IMR-90 (cell line): ENCODE measurements at regions of chr4 and their contacts with region 1.

Region 1: GRCh38 chr4:54082168-54082567 is 17.8 kb upstream of the CHIC2 start:
- DNase-seq: peak; percentile 100
- ATAC-seq: peak; percentile 87
- H3K4me3 ChIP-seq: no peak overlapping the region
- H3K27ac ChIP-seq: peak overlapping the region; percentile 48; the same call in 1 of the 2 replicates
- H3K4me1 ChIP-seq: peaks cover 16% of the 10 kb centered on the region
- H3K27me3 ChIP-seq: no peaks in the 10 kb centered on the region
- CTCF ChIP-seq: no peak
- POLR2A ChIP-seq: no peak
- RAD21 ChIP-seq: no peak

Region 2: DNA sequence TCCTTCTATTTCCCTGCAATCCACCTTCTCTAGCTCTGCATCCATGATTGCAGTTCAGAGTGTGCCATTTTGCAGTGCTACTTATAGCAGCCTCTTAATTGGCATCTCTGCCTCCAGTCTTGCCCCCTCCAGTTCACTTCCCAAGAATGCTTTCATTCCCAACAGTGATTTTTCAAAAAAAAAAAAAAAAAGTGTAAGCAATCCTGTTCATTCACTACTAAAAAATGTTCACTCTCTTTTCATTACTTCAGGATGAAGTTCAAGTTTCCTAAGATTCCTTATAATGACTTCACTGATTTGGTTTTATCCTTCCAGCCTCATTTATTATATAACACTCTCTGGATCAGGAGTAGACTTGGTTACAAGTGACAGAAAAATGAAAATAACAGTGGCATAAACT is 366.2 kb before region 1 on chr4:
- CTCF ChIA-PET with region 1: no interaction called
- POLR2A ChIA-PET with region 1: interaction called, 10 read pairs
- dilution Hi-C with region 1: no loop called
- in situ Hi-C with region 1: no loop called
- intact Hi-C with region 1: no loop called
- DNase-seq: peak; percentile 52
- ATAC-seq: peak; percentile 30
- H3K4me3 ChIP-seq: no peak overlapping the region
- H3K27ac ChIP-seq: no peak overlapping the region
- H3K4me1 ChIP-seq: peaks cover 28% of the 10 kb centered on the region
- H3K27me3 ChIP-seq: no peaks in the 10 kb centered on the region
- CTCF ChIP-seq: no peak
- POLR2A ChIP-seq: no peak
- RAD21 ChIP-seq: no peak

Region 3: DNA sequence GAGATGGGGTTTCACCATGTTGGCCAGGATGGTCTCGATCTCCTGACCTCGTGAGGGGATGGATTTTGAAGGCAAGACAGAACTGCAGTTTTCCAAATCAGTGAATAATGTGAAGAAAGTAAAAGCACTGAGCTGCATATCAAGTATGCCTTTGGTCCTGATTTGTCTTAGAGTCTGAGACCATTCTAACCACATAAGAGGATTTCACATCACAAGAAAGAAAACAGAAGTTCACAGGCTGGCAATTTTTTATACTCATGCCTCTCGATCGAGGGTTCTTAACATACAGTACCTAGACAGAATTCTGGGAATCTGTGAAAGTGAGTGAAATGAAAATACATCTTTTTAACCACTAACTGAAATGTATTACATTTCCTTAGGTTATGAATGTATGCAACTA is 41.1 kb before region 1 on chr4:
- CTCF ChIA-PET with region 1: no interaction called
- POLR2A ChIA-PET with region 1: no interaction called
- dilution Hi-C with region 1: no loop called
- in situ Hi-C with region 1: no loop called
- intact Hi-C with region 1: no loop called
- DNase-seq: no peak
- ATAC-seq: no peak
- H3K4me3 ChIP-seq: no peak overlapping the region
- H3K27ac ChIP-seq: no peak overlapping the region
- H3K4me1 ChIP-seq: 0 out of 2 replicates have a peak, but pooled peaks cover 2% of the 10 kb centered on the region
- H3K27me3 ChIP-seq: no peaks in the 10 kb centered on the region
- CTCF ChIP-seq: no peak
- POLR2A ChIP-seq: no peak
- RAD21 ChIP-seq: no peak

Region 4: GRCh38 chr4:54152846-54153600 is 70.9 kb after region 1 on chr4:
- CTCF ChIA-PET with region 1: no interaction called
- POLR2A ChIA-PET with region 1: no interaction called
- dilution Hi-C with region 1: no loop called
- in situ Hi-C with region 1: no loop called
- intact Hi-C with region 1: loop called (anchors 5 kb)
- DNase-seq: peak; percentile 63
- ATAC-seq: peak; percentile 90
- H3K4me3 ChIP-seq: no peak overlapping the region
- H3K27ac ChIP-seq: no peak overlapping the region
- H3K4me1 ChIP-seq: peaks cover 8% of the 10 kb centered on the region; the same call in 1 of the 2 replicates
- H3K27me3 ChIP-seq: no peaks in the 10 kb centered on the region
- CTCF ChIP-seq: no peak
- POLR2A ChIP-seq: no peak
- RAD21 ChIP-seq: no peak

Region 5: DNA sequence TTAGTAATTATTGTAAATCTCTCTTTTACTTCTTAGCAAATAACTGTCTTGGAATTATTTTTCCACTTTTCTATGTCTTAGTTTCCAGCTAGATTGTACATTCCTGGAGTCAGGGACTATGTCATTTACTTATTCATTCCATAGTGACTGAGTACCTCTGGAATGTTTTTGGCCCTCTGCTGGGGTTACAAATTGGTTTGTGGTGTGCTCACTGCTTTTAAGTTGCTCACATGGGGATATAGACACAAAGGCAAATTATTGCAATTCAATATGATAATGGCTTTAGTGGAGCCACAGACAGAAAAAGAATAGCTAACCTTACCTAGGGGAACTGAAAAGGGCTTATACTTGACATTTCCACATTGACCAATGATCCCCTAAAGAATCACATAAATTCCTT is 83.3 kb after region 1 on chr4:
- CTCF ChIA-PET with region 1: no interaction called
- POLR2A ChIA-PET with region 1: no interaction called
- dilution Hi-C with region 1: no loop called
- in situ Hi-C with region 1: no loop called
- intact Hi-C with region 1: loop called (anchors 5 kb)
- DNase-seq: peak; percentile 96
- ATAC-seq: peak; percentile 97
- H3K4me3 ChIP-seq: no peak overlapping the region
- H3K27ac ChIP-seq: peak overlapping the region; percentile 5; the same call in 1 of the 2 replicates
- H3K4me1 ChIP-seq: peaks cover 8% of the 10 kb centered on the region
- H3K27me3 ChIP-seq: no peaks in the 10 kb centered on the region
- CTCF ChIP-seq: no peak; the same call in 1 of the 2 replicates
- POLR2A ChIP-seq: no peak
- RAD21 ChIP-seq: 0 out of 2 replicates have a peak, but pooled peaks have one; percentile 14

Region 6: DNA sequence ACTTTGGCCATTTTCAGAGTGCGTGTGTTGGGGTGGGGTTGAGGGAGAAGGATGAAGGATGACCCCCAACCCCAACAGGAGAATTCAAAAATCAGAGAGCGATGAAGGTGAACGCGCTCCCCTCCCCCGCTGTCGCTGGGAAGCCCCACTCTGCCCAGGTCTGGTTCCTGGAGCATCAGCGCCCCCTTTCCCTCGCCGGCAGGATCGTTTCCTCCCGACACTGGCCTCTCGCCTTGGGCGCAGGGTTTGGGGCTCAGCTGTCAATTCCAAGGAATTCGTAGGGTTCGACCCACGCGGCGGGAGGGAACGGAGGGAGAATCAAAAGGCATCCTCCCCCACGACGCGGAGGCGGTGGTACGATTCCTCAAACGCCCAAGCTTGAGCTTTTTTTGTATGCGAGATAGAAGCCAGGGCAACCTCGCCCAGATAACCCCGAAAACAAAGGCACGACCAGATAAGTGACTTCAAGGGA is 145.9 kb after region 1 on chr4:
- CTCF ChIA-PET with region 1: no interaction called
- POLR2A ChIA-PET with region 1: no interaction called
- dilution Hi-C with region 1: no loop called
- in situ Hi-C with region 1: no loop called
- intact Hi-C with region 1: no loop called
- DNase-seq: peak; percentile 82
- ATAC-seq: peak; percentile 48
- H3K4me3 ChIP-seq: peak overlapping the region; percentile 89
- H3K27ac ChIP-seq: peak overlapping the region; percentile 83
- H3K4me1 ChIP-seq: peaks cover 15% of the 10 kb centered on the region
- H3K27me3 ChIP-seq: no peaks in the 10 kb centered on the region
- CTCF ChIP-seq: peak; percentile 95
- POLR2A ChIP-seq: peak; percentile 26; the same call in 1 of the 2 replicates
- RAD21 ChIP-seq: peak; percentile 97

Region 7: DNA sequence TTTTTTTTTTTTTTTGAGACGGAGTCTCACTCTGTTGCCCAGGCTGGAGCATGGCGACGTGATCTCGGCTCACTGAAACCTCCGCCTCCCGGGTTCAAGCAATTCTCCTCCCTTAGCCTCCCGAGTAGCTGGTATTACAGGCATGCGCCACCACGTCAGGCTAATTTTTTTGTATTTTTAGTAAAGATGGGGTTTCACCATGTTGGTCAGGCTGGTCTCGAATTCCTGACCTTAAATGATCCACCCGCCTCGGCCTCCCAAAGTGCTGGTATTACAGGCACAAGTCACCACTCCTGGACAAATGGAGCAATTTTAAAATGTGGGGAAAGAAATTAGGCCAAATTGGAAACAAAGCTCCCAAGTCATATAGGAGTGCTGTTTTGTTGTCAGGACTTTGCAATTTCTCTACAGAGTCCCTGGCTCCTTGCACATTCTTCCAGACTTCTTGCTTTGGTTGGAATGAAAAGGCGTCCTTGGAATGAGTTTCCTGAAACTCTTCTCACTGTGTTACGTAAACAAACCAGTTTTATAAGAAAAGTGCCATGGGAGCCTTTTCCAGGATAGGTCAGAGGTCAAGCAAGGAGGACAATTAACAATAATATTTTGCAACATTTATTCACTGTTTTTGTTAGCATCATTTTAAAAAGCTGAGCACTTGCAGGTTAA is 543.1 kb after region 1 on chr4:
- CTCF ChIA-PET with region 1: no interaction called
- POLR2A ChIA-PET with region 1: no interaction called
- dilution Hi-C with region 1: no loop called
- in situ Hi-C with region 1: no loop called
- intact Hi-C with region 1: no loop called
- DNase-seq: no peak
- ATAC-seq: peak; percentile 21; the same call in 1 of the 2 replicates
- H3K4me3 ChIP-seq: no peak overlapping the region
- H3K27ac ChIP-seq: no peak overlapping the region
- H3K4me1 ChIP-seq: no peaks in the 10 kb centered on the region
- H3K27me3 ChIP-seq: peaks cover 13% of the 10 kb centered on the region
- CTCF ChIP-seq: no peak
- POLR2A ChIP-seq: no peak
- RAD21 ChIP-seq: no peak